GM10248 (cell line): ENCODE measurements at regions of chr15 and their contacts with region 1.

Region 1: GRCh38 chr15:40307421-40308211 is at the start of gene PLCB2:
- DNase-seq: peak; percentile 84
- CTCF ChIP-seq: peak; percentile 45

Region 2: GRCh38 chr15:39657714-39658113 is 649.9 kb before region 1 on chr15:
- CTCF ChIA-PET with region 1: no interaction called
- POLR2A ChIA-PET with region 1: no interaction called
- DNase-seq: no peak
- CTCF ChIP-seq: no peak

Region 3: GRCh38 chr15:40282144-40282868 is 25.3 kb before region 1 on chr15:
- CTCF ChIA-PET with region 1: interaction called, 405 read pairs
- POLR2A ChIA-PET with region 1: no interaction called
- DNase-seq: peak; percentile 71
- CTCF ChIP-seq: peak; percentile 72

Region 4: DNA sequence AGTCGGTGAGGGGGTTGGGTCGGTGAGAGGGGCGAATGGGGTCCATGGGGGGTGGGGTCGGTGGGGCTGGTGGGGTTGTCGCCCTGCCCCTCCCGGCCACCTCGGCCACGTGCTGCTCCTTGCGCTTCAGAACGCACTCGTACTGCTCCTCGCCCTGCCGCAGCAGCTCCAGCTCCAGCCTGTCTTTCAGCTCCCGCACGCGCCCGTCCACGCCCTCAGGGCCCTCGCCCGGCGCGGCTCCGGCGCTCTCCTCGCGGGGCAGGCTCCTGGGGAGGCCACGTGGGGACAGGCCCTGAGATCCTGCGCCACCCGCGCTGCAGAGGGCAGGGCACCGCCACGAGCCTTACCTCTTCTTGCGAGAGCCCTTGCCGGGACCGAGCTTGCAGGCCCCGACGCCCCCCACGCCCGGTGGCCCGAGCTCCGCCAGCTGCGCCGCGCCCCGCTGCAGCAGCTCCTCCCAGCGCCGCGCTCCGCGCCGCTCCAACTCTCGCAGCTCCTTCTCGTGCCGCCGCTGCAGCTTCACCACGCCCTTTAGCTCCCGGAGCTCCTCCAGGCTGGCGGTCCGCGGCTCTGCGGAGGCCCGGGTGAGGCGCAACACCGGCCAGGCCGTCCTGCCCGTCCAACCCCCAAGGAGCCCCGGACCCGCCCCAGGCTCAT is 16.6 kb before region 1 on chr15:
- CTCF ChIA-PET with region 1: interaction called, 15 read pairs
- POLR2A ChIA-PET with region 1: no interaction called
- DNase-seq: no peak
- CTCF ChIP-seq: no peak

Region 5: GRCh38 chr15:40323239-40323952 is 15.8 kb after region 1 on chr15 and contains the start of gene INAFM2:
- CTCF ChIA-PET with region 1: interaction called, 106 read pairs
- POLR2A ChIA-PET with region 1: interaction called, 3 read pairs
- DNase-seq: peak; percentile 96
- CTCF ChIP-seq: peak; percentile 40

Region 6: DNA sequence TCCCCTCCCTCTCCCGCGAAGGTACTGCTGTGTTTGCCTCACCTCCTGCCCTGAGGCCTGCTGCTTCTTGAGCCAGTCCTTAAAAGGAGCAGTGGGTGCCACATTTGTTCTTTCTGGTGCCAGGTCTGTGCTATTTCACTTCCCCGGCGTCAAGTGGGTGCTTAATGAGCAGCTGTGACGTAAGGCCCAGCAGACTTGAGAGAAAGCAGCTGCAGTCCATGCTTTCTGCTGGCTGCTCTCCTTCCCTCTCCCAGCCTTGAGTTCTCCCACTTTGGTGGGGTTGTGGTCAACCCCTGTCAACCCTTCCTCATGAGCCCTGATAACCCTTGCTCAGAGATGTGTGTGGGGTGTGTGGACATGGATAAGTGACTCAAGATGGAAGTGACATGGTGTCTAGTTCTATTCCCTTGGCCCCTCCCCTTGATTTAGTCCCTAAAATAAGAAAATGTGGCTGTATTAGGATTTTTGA is 22.8 kb after region 1 on chr15:
- CTCF ChIA-PET with region 1: interaction called, 87 read pairs
- POLR2A ChIA-PET with region 1: no interaction called
- DNase-seq: no peak
- CTCF ChIP-seq: no peak

Region 7: GRCh38 chr15:40344631-40345120 is 37.1 kb after region 1 on chr15:
- CTCF ChIA-PET with region 1: interaction called, 87 read pairs
- POLR2A ChIA-PET with region 1: no interaction called
- DNase-seq: peak; percentile 88
- CTCF ChIP-seq: peak; percentile 89